Panc1 (cell line): ENCODE measurements at regions of chr2 and their contacts with region 1.

Region 1: GRCh38 chr2:25362049-25362433 is 20.3 kb upstream of the DNMT3A start:
- DNase-seq: peak; percentile 81
- ATAC-seq: peak; percentile 98
- H3K4me3 ChIP-seq: peak overlapping the region; percentile 41 to 54
- H3K27ac ChIP-seq: peak overlapping the region; percentile 88
- H3K4me1 ChIP-seq: peaks cover 7% of the 10 kb centered on the region
- H3K27me3 ChIP-seq: no peaks in the 10 kb centered on the region
- CTCF ChIP-seq: peak; percentile 99

Region 2: DNA sequence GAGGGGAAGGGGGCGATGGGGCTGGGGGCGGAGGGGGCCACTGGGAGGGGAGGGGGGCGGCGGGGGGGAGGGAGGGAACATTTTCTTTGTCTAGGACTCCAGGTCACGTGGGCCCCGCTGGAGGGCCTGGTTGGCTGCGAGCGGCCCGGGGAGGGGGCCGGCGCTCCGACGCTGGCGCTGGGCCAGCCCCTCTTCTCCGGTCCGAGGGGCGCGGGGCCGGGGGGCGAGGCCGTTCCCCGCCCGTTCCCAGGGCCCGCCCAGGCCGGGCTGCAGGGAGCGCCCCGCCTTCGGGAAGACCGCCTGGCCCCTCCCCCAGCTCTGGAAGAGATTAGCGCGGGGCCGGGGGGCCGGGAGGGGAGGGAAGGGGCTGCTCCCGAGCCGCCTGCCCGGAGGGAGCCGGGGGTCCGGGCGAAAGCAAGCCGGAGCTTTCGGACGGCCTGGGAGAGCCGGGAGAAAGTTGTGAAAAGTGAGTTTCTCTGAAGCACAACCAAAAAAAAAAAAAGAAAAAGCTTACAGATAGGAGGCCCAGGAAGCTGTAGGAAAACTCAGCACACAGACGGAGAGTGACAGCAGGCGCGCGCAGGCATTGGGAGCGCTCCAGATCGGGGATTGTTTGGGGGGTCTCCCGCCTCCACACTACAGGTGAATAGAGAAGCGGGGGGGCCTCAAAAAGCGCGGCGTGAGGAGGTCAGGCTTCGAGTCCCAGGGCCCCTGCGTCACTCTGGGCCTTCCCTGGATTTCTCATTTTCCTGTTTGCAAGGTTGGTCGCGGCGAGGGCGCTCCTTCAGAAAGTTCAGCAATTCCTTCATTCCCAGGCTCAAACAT is 109.5 kb before region 1 on chr2:
- CTCF ChIA-PET with region 1: interaction called, 13 read pairs
- POLR2A ChIA-PET with region 1: no interaction called
- in situ Hi-C with region 1: no loop called
- intact Hi-C with region 1: no loop called
- DNase-seq: no peak
- ATAC-seq: peak; percentile 82
- H3K4me3 ChIP-seq: peak overlapping the region; percentile 46 to 60
- H3K27ac ChIP-seq: peak overlapping the region; percentile 63
- H3K4me1 ChIP-seq: peaks cover 7% of the 10 kb centered on the region
- H3K27me3 ChIP-seq: no peaks in the 10 kb centered on the region
- CTCF ChIP-seq: no peak

Region 3: GRCh38 chr2:25294573-25295462 is 67.2 kb before region 1 on chr2:
- CTCF ChIA-PET with region 1: interaction called, 19 read pairs
- POLR2A ChIA-PET with region 1: no interaction called
- in situ Hi-C with region 1: no loop called
- intact Hi-C with region 1: no loop called
- DNase-seq: no peak
- ATAC-seq: peak; percentile 66
- H3K4me3 ChIP-seq: no peak overlapping the region
- H3K27ac ChIP-seq: no peak overlapping the region
- H3K4me1 ChIP-seq: peaks cover 5% of the 10 kb centered on the region; the same call in 1 of the 2 replicates
- H3K27me3 ChIP-seq: no peaks in the 10 kb centered on the region
- CTCF ChIP-seq: no peak

Region 4: DNA sequence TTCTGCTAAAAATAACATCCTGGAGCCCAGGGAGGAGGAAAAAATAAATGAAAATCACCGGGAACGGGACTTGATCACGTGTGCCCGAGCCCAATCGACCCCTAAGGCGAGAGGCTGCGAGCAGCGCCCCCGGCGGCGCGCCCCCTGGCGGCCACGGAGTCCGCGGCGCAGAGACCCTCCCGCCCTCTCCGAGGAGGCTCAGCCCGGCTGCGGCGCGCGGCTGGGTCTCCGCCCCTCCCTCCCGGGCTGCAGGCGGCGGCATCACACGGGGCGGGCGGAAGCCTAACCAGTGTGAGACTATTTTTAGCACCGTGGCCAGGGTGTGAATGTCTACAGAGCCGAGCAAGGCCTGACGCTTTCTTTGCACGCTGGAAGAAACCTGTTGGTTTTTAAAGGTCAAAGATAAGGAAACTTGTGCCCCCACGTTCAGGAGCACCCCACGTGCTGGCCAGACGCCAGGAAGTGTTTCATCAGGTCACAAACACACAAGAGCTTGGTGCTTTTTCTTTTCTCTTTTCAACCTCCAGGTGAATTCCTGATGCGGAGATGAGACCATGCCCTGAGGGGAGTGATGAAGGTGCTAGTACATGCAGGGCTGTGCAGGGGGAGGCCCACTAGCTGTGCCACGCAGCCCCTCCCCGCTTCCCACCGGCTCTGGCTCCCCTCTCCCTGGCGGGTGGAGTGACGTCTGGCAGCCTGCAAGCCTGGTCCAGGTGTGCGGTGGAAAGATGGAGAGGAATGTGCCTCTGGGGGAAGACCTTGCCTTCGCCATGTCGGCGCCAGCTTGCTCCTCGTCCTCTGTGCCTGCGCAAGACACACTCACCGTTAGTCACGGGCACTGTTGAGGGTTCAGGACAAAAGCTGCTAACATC is 14.9 kb after region 1 on chr2:
- CTCF ChIA-PET with region 1: interaction called, 13 read pairs
- POLR2A ChIA-PET with region 1: interaction called, 18 read pairs
- in situ Hi-C with region 1: no loop called
- intact Hi-C with region 1: no loop called
- DNase-seq: peak; percentile 39
- ATAC-seq: peak; percentile 94
- H3K4me3 ChIP-seq: peak overlapping the region; percentile 24 to 41
- H3K27ac ChIP-seq: no peak overlapping the region
- H3K4me1 ChIP-seq: no peaks in the 10 kb centered on the region; the same call in 1 of the 2 replicates
- H3K27me3 ChIP-seq: no peaks in the 10 kb centered on the region
- CTCF ChIP-seq: peak; percentile 99

Region 5: GRCh38 chr2:25618642-25619037 is 256.6 kb after region 1 on chr2:
- CTCF ChIA-PET with region 1: no interaction called
- POLR2A ChIA-PET with region 1: no interaction called
- in situ Hi-C with region 1: no loop called
- intact Hi-C with region 1: no loop called
- DNase-seq: peak; percentile 75
- ATAC-seq: peak; percentile 86
- H3K4me3 ChIP-seq: peak overlapping the region in 1 of 2 experiments; percentile 27; a peak in 2 of 4 replicates
- H3K27ac ChIP-seq: peak overlapping the region; percentile 52
- H3K4me1 ChIP-seq: peaks cover 37% of the 10 kb centered on the region
- H3K27me3 ChIP-seq: no peaks in the 10 kb centered on the region
- CTCF ChIP-seq: no peak

Region 6: GRCh38 chr2:25639171-25639570 is 277.1 kb after region 1 on chr2:
- CTCF ChIA-PET with region 1: no interaction called
- POLR2A ChIA-PET with region 1: interaction called, 15 read pairs
- in situ Hi-C with region 1: no loop called
- intact Hi-C with region 1: no loop called
- DNase-seq: no peak
- ATAC-seq: no peak
- H3K4me3 ChIP-seq: no peak overlapping the region
- H3K27ac ChIP-seq: no peak overlapping the region
- H3K4me1 ChIP-seq: no peaks in the 10 kb centered on the region
- H3K27me3 ChIP-seq: no peaks in the 10 kb centered on the region
- CTCF ChIP-seq: no peak